Sigmoid colon (tissue), 7 donors: ENCODE measurements at regions of chr2 and their contacts with region 1.

Region 1: GRCh38 chr2:61176755-61177726 is 15.1 kb downstream of the C2orf74 start:
- DNase-seq: peak; percentile 96
- H3K4me3 ChIP-seq: peak overlapping the region; percentile 74 to 94 (median 88)
- H3K27ac ChIP-seq: peak overlapping the region; percentile 97 to 99 (median 98)
- H3K4me1 ChIP-seq: peaks cover 0 to 47% (median 46%) of the 10 kb centered on the region in 4 donors
- H3K27me3 ChIP-seq: no peaks in the 10 kb centered on the region
- CTCF ChIP-seq: no peak
- EP300 ChIP-seq: peak in 2 of 4 donors; percentile 45 to 70
- POLR2A ChIP-seq: peak; percentile 64 to 79

Region 2: GRCh38 chr2:61144697-61145268 is 32.3 kb before region 1 on chr2:
- intact Hi-C with region 1: loop called (anchors 1 kb)
- DNase-seq: peak; percentile 99
- H3K4me3 ChIP-seq: peak overlapping the region; percentile 26 to 59 (median 58)
- H3K27ac ChIP-seq: peak overlapping the region; percentile 76 to 84 (median 81)
- H3K4me1 ChIP-seq: peaks cover 0 to 14% (median 7%) of the 10 kb centered on the region in 4 donors
- H3K27me3 ChIP-seq: no peaks in the 10 kb centered on the region
- CTCF ChIP-seq: no peak
- EP300 ChIP-seq: peak in 1 of 4 donors; percentile 31
- POLR2A ChIP-seq: peak; percentile 28 to 33

Region 3: GRCh38 chr2:61220768-61221167 is 43.7 kb after region 1 on chr2:
- intact Hi-C with region 1: no loop called
- DNase-seq: no peak
- H3K4me3 ChIP-seq: no peak overlapping the region
- H3K27ac ChIP-seq: no peak overlapping the region
- H3K4me1 ChIP-seq: no peaks in the 10 kb centered on the region
- H3K27me3 ChIP-seq: no peaks in the 10 kb centered on the region
- CTCF ChIP-seq: no peak
- EP300 ChIP-seq: no peak
- POLR2A ChIP-seq: no peak